CD4-positive, alpha-beta T cell (primary cell): ENCODE measurements at regions of chr22 and their contacts with region 1.

Region 1: DNA sequence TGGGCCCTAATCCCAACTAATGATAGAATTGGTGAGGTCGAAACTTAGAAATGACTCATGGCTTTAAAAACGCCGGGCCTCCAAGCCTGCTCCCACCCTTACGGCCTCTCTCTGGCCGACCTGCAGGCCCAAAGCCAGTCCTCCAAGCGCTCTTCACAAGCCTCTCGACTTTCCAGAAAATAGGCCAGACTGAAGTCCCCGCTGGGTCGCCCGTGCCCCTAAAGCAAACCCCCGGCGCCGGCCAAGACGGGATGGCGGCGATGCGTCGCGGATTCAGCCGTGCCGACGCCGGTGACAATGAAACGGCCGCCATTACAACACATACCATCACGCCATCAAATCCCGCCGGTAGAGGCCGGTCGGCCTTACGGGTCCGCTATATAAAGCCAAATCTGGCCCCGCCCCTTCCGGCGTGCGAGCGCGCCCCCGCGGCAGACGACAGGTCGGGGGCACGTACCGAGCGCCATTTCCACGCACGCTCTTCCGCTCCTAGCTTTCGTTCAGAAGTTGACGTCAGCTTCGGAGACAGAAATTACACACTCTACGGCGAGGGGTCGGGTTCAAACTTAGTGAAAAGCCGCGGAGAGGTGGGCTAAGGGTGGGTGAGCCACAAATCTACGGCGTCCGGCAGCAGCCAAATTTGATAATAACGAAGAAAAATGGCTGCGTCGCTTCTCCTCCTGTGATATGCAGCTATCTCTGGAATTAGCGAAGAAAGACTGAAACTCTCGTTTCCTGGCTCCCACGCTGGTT is at the start of gene RPL3:
- DNase-seq: peak; percentile 96 to 99 (median 98)
- ATAC-seq: peak; percentile 76
- H3K4me3 ChIP-seq: peak within 1 kb of the TSS; percentile 90
- H3K4me3 Mint-ChIP-seq: peak within 1 kb of the TSS; percentile 99
- H3K27ac ChIP-seq: peak within 1 kb of the TSS; percentile 88 to 92
- H3K27ac Mint-ChIP-seq: peak within 1 kb of the TSS; percentile 96
- H3K4me1 ChIP-seq: peaks cover 57% of the 10 kb centered on the region
- H3K4me1 Mint-ChIP-seq: peaks cover 41% of the 10 kb centered on the region
- H3K27me3 ChIP-seq: no peaks in the 10 kb centered on the region
- H3K27me3 Mint-ChIP-seq: no peaks in the 10 kb centered on the region
- CTCF ChIP-seq: no peak
- total RNA-seq, gene RPL3: 3,952 to 3,974 TPM

Region 2: DNA sequence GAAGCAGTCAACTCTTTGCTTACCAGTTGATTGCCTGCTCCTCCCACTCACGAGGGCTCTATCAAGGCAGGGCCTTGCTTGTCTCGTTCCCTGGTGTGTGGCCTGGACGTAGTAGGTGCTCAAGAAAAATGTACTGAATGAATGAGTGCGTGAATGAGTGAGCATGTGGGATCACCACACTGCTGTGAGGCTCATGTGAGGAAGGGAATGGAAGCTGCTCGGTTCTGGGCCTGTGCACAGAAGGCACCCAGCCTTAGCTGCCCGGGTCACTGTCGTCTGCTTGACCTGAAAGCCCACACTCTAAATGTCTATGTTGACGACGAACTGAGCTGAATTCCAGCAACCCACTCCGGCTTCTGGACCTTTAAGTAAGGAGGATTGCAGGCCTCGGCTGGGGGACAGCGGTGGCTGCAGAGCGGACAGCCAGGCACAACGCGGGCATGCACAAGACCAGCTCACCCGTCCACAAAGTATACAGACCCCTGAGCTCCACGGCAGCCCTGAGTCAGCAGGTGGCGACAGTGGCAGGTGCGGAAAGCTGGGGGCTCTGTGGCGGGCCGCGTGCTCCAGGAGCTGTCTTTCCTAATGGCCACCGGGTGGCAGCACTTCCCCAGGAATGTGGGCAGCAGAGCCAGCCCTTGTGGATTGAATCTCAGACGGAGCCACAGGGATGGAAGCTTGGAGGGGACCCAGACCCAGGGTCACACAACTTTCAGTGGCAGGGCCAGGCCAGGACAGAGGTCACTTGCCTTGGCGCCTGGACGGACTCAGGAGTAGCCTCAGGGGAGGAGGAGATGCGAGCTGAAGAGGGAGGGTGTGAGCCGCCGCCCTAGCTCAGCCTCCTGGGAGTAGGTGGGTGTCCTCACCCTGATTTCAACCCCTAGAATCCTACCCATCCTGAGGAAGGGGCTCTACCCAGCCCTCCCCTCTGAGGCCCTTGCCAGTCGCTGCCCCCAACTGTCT is 1267.3 kb before region 1 on chr22:
- CTCF ChIA-PET with region 1: no interaction called
- POLR2A ChIA-PET with region 1: no interaction called
- intact Hi-C with region 1: loop called in 1 of 2 experiments (anchors 10 kb)
- DNase-seq: peak; percentile 59 to 90 (median 70)
- ATAC-seq: peak; percentile 74
- H3K4me3 ChIP-seq: no peak overlapping the region
- H3K4me3 Mint-ChIP-seq: no peak overlapping the region
- H3K27ac ChIP-seq: no peak overlapping the region
- H3K27ac Mint-ChIP-seq: no peak overlapping the region
- H3K4me1 ChIP-seq: peaks cover 21% of the 10 kb centered on the region
- H3K4me1 Mint-ChIP-seq: peaks cover 7% of the 10 kb centered on the region
- H3K27me3 ChIP-seq: no peaks in the 10 kb centered on the region
- H3K27me3 Mint-ChIP-seq: peaks cover 12% of the 10 kb centered on the region
- CTCF ChIP-seq: peak; percentile 78

Region 3: DNA sequence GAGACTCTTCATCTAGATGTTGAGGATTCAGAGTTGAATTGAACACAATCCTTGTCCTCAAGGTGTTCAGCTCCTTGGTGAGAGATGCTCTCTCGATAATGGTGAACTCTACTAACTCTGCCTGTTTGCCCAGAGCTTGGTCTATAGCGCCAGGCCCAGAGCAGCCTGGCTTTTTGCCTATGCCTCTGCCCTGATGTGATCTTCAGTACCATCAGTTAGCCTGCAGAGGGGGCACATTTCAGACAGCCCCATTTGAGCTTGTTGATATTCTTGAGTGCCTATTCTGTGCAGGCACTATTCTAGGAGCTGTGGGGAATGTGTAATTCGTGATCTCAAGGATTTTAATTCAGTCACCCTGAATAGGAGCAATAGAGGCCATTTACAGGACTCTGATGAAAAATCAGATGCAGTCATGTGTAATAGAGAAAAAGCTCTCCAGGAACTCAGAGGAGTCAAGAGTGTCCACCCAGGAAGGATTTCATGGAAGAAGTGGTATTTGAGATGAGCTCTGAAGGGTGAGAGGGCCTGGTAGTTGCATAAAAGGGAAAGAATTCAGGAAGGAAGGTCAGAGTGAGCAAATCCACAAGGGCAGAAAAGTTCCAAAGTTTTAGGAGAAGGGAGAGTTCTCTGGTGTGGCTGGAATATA is 594.4 kb before region 1 on chr22:
- CTCF ChIA-PET with region 1: no interaction called
- POLR2A ChIA-PET with region 1: no interaction called
- intact Hi-C with region 1: no loop called
- DNase-seq: peak in 7 of 14 experiments; percentile 22 to 75 (median 53)
- ATAC-seq: peak; percentile 92
- H3K4me3 ChIP-seq: no peak overlapping the region
- H3K4me3 Mint-ChIP-seq: no peak overlapping the region
- H3K27ac ChIP-seq: no peak overlapping the region
- H3K27ac Mint-ChIP-seq: peak overlapping the region; percentile 78
- H3K4me1 ChIP-seq: peaks cover 1% of the 10 kb centered on the region
- H3K4me1 Mint-ChIP-seq: peaks cover 15% of the 10 kb centered on the region
- H3K27me3 ChIP-seq: no peaks in the 10 kb centered on the region
- H3K27me3 Mint-ChIP-seq: no peaks in the 10 kb centered on the region
- CTCF ChIP-seq: peak; percentile 62

Region 4: DNA sequence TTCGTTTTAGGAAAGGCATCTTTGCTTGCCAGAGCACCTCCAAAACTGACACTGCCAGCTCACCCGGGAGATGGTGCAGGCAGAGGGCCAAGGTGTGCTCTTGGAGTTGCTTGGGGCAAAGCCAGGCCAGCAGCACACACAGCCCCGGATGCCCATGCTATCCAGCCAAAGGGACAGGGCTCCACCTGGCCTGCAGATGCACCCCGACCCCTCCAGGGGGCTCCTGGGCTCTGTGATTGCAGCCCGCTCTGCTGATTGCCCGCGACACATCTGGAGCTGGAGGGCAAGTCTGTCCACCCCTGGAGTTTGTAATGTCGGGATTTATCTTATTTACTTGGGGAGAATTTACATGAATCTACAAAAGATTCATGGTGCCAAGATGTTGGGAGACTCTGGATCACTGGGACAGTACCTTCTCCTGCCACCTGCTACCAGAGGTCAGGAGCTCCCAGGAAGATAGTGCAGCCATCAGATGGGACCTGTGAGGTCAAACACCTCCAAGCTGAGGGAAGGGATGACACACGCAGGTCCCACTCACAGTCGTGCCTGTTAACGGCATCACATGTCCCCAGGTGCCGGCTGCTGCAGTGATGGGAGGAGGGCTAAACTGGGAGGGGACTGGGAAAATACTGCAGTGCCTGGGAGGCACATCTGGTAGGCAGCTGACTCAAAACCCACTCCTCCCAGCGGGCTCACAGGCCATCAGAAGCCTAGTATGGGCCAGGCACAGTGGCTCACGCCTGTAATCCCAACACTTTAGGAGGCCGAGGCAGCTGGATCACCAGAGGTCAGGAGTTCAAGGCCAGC is 184.2 kb before region 1 on chr22:
- CTCF ChIA-PET with region 1: interaction called, 9 read pairs
- POLR2A ChIA-PET with region 1: interaction called, 10 read pairs
- intact Hi-C with region 1: no loop called
- DNase-seq: peak in 13 of 14 experiments; percentile 32 to 63 (median 42)
- ATAC-seq: peak; percentile 73
- H3K4me3 ChIP-seq: no peak overlapping the region
- H3K4me3 Mint-ChIP-seq: no peak overlapping the region
- H3K27ac ChIP-seq: no peak overlapping the region
- H3K27ac Mint-ChIP-seq: no peak overlapping the region
- H3K4me1 ChIP-seq: no peaks in the 10 kb centered on the region
- H3K4me1 Mint-ChIP-seq: peaks cover 5% of the 10 kb centered on the region
- H3K27me3 ChIP-seq: no peaks in the 10 kb centered on the region
- H3K27me3 Mint-ChIP-seq: no peaks in the 10 kb centered on the region
- CTCF ChIP-seq: peak; percentile 34

Region 5: DNA sequence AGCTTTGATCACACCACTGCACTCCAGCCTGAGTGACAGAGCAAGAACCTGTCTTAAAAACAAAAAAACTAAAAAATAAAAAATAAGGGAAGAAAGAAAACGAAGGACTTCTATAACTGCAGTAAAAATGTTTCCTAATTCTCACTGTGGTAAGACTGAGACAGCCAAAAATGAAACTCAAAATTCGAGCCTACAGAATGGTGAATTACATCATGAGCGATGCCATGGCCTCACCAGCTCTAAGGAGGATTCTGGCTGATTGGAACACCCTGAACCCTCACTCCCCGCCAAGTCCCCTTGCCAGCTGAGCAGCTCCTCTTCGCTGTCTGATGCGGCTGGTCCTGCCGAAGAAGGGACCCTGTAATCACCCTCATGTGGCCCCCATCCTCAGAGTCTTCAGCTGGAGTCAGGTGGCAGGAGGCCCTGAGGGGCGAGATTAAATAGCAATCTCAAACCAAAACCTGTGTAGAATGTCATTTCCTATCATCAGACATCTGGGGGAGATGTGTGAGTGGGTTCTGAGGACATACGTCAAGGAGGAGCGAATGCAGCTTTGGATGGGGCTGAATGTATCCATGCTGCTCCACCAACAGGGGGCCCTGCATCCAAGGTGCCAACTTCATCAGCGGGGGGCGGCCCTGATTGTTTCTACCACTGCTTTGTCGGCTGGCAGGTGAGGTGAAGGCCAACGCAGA is 103.9 kb before region 1 on chr22:
- CTCF ChIA-PET with region 1: interaction called, 3 read pairs
- POLR2A ChIA-PET with region 1: interaction called, 13 read pairs
- intact Hi-C with region 1: no loop called
- DNase-seq: peak in 10 of 14 experiments; percentile 17 to 73 (median 36)
- ATAC-seq: peak; percentile 96
- H3K4me3 ChIP-seq: no peak overlapping the region
- H3K4me3 Mint-ChIP-seq: no peak overlapping the region
- H3K27ac ChIP-seq: no peak overlapping the region
- H3K27ac Mint-ChIP-seq: no peak overlapping the region
- H3K4me1 ChIP-seq: no peaks in the 10 kb centered on the region
- H3K4me1 Mint-ChIP-seq: peaks cover 4% of the 10 kb centered on the region
- H3K27me3 ChIP-seq: peaks cover 5 to 14% of the 10 kb centered on the region in 2 experiments
- H3K27me3 Mint-ChIP-seq: peaks cover 23% of the 10 kb centered on the region
- CTCF ChIP-seq: peak; percentile 14

Region 6: DNA sequence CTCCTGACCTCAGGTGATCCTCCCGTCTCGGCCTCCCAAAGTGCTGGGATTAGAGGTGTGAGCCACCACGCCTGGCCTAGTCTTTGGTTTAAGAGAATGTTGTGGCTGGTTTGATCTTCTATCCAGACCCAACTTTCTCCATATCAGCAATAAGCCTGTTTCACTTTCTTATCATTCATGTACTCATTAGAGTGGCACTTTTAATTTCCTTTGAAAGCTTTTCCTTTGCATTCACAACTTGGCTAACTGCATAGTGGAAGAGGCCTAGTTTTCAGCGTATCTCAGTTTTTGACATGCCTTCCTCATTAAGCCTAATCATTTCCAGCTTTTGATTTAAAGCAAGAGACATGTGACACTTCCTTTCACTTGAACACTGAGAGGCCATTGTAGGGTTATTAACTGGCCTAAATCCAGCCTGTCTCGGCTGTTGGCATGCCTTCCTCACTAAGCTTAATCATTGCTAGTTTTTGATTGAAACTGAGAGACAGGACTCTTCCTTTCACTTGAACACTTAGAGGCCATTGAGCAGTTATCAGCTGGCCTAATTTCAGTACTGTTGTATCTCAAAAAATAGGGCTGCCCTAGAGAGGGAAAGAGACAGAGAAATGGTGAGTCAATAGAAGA is 13.1 kb after region 1 on chr22:
- CTCF ChIA-PET with region 1: interaction called, 3 read pairs
- POLR2A ChIA-PET with region 1: interaction called, 25 read pairs
- intact Hi-C with region 1: no loop called
- DNase-seq: no peak
- ATAC-seq: no peak
- H3K4me3 ChIP-seq: no peak overlapping the region
- H3K4me3 Mint-ChIP-seq: no peak overlapping the region
- H3K27ac ChIP-seq: no peak overlapping the region
- H3K27ac Mint-ChIP-seq: no peak overlapping the region
- H3K4me1 ChIP-seq: no peaks in the 10 kb centered on the region
- H3K4me1 Mint-ChIP-seq: peaks cover 14% of the 10 kb centered on the region
- H3K27me3 ChIP-seq: no peaks in the 10 kb centered on the region
- H3K27me3 Mint-ChIP-seq: no peaks in the 10 kb centered on the region
- CTCF ChIP-seq: no peak

Region 7: GRCh38 chr22:39368461-39368911 is 49.0 kb after region 1 on chr22:
- CTCF ChIA-PET with region 1: no interaction called
- POLR2A ChIA-PET with region 1: no interaction called
- intact Hi-C with region 1: no loop called
- DNase-seq: no peak
- ATAC-seq: no peak
- H3K4me3 ChIP-seq: no peak overlapping the region
- H3K4me3 Mint-ChIP-seq: no peak overlapping the region
- H3K27ac ChIP-seq: no peak overlapping the region
- H3K27ac Mint-ChIP-seq: no peak overlapping the region
- H3K4me1 ChIP-seq: no peaks in the 10 kb centered on the region
- H3K4me1 Mint-ChIP-seq: peaks cover 6% of the 10 kb centered on the region
- H3K27me3 ChIP-seq: no peaks in the 10 kb centered on the region
- H3K27me3 Mint-ChIP-seq: no peaks in the 10 kb centered on the region
- CTCF ChIP-seq: no peak

Region 8: GRCh38 chr22:39395936-39396796 is 76.7 kb after region 1 on chr22:
- CTCF ChIA-PET with region 1: interaction called, 8 read pairs
- POLR2A ChIA-PET with region 1: interaction called, 24 read pairs
- intact Hi-C with region 1: loop called in 1 of 2 experiments (anchors 1 kb)
- DNase-seq: no peak
- ATAC-seq: no peak
- H3K4me3 ChIP-seq: no peak overlapping the region
- H3K4me3 Mint-ChIP-seq: peak overlapping the region; percentile 17
- H3K27ac ChIP-seq: no peak overlapping the region
- H3K27ac Mint-ChIP-seq: no peak overlapping the region
- H3K4me1 ChIP-seq: peaks cover 19% of the 10 kb centered on the region
- H3K4me1 Mint-ChIP-seq: peaks cover 18% of the 10 kb centered on the region
- H3K27me3 ChIP-seq: no peaks in the 10 kb centered on the region
- H3K27me3 Mint-ChIP-seq: no peaks in the 10 kb centered on the region
- CTCF ChIP-seq: no peak

Region 9: GRCh38 chr22:39520054-39520891 is 200.8 kb after region 1 on chr22 and contains the start of gene ATF4:
- CTCF ChIA-PET with region 1: interaction called, 3 read pairs
- POLR2A ChIA-PET with region 1: interaction called, 30 read pairs
- intact Hi-C with region 1: loop called in 1 of 2 experiments (anchors 1 kb)
- DNase-seq: peak; percentile 93 to 99 (median 94)
- ATAC-seq: peak; percentile 91
- H3K4me3 ChIP-seq: peak within 1 kb of the TSS; percentile 100
- H3K4me3 Mint-ChIP-seq: peak within 1 kb of the TSS; percentile 97
- H3K27ac ChIP-seq: peak within 1 kb of the TSS; percentile 92 to 95
- H3K27ac Mint-ChIP-seq: peak within 1 kb of the TSS; percentile 98
- H3K4me1 ChIP-seq: peaks cover 52% of the 10 kb centered on the region
- H3K4me1 Mint-ChIP-seq: peaks cover 57% of the 10 kb centered on the region
- H3K27me3 ChIP-seq: no peaks in the 10 kb centered on the region
- H3K27me3 Mint-ChIP-seq: peaks cover 5% of the 10 kb centered on the region
- CTCF ChIP-seq: no peak
- total RNA-seq, gene ATF4: 358 to 365 TPM